Activated naive CD4-positive, alpha-beta T cell treated with anti-CD3 and anti-CD28 coated beads for 36 hours (primary cell): ENCODE measurements at regions of chr7 and their contacts with region 1.

Region 1: GRCh38 chr7:28921822-28922221 is 36.3 kb downstream of the TRIL start:
- DNase-seq: peak; percentile 49
- H3K4me3 Mint-ChIP-seq: no peak overlapping the region
- H3K27ac Mint-ChIP-seq: no peak overlapping the region
- H3K4me1 Mint-ChIP-seq: peaks cover 15% of the 10 kb centered on the region
- H3K27me3 Mint-ChIP-seq: no peaks in the 10 kb centered on the region

Region 2: GRCh38 chr7:28793381-28794085 is 128.3 kb before region 1 on chr7:
- CTCF ChIA-PET with region 1: no interaction called
- intact Hi-C with region 1: no loop called
- DNase-seq: no peak
- H3K4me3 Mint-ChIP-seq: no peak overlapping the region
- H3K27ac Mint-ChIP-seq: no peak overlapping the region
- H3K4me1 Mint-ChIP-seq: no peaks in the 10 kb centered on the region
- H3K27me3 Mint-ChIP-seq: no peaks in the 10 kb centered on the region

Region 3: DNA sequence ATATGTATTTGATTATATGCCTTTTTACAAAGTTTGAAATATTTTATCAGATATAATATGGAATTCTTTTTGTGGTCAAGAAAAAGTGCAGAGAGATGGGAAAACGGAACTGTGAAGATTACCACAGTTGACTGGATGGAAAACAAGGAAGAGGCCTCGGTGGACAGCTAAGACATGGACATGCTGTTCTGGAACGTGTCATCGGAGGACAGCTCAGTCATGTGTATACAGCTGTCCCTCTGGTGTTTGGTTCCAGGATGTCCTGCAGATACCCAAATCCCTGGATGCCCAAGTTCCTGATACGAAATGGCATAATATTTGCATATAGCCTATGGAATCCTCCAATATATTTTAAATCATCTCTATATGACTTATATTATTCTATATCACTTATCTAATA is 13.0 kb before region 1 on chr7:
- CTCF ChIA-PET with region 1: interaction called, 20 read pairs
- intact Hi-C with region 1: no loop called
- DNase-seq: no peak
- H3K4me3 Mint-ChIP-seq: no peak overlapping the region
- H3K27ac Mint-ChIP-seq: no peak overlapping the region
- H3K4me1 Mint-ChIP-seq: no peaks in the 10 kb centered on the region
- H3K27me3 Mint-ChIP-seq: peaks cover 2% of the 10 kb centered on the region

Region 4: GRCh38 chr7:29105752-29106668 is 184.2 kb after region 1 on chr7:
- CTCF ChIA-PET with region 1: interaction called, 99 read pairs
- intact Hi-C with region 1: loop called (anchors 1 kb)
- DNase-seq: peak; percentile 37
- H3K4me3 Mint-ChIP-seq: no peak overlapping the region
- H3K27ac Mint-ChIP-seq: no peak overlapping the region
- H3K4me1 Mint-ChIP-seq: peaks cover 5% of the 10 kb centered on the region
- H3K27me3 Mint-ChIP-seq: peaks cover 6% of the 10 kb centered on the region

Region 5: GRCh38 chr7:29194594-29195427 is 273.0 kb after region 1 on chr7 and contains the start of gene CHN2:
- CTCF ChIA-PET with region 1: interaction called, 14 read pairs
- intact Hi-C with region 1: loop called (anchors 2 kb)
- DNase-seq: peak; percentile 63
- H3K4me3 Mint-ChIP-seq: peak within 1 kb of the TSS; percentile 64
- H3K27ac Mint-ChIP-seq: no peak within 1 kb of the TSS
- H3K4me1 Mint-ChIP-seq: peaks cover 14% of the 10 kb centered on the region
- H3K27me3 Mint-ChIP-seq: peaks cover 59% of the 10 kb centered on the region
- total RNA-seq, gene CHN2: not detected

Region 6: DNA sequence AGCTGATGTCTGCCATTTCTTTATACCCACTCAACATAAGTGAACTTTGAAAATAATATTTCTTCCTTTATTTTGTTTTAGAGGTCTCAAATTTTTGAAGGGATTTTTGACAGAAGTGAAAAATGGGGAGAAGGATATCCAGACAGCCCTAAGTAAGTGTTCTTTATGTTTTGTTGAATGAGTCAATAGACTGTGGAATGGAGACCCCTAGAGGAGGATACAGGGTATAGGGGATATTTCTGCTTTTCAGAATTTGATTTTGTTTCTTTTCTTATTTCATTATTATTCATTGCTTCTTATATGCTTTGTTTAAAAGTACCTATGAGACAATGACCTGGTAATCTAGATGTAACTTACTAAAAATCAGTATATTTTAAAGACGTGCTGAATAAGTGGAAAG is 1140.8 kb after region 1 on chr7:
- CTCF ChIA-PET with region 1: no interaction called
- intact Hi-C with region 1: loop called (anchors 5 kb)
- DNase-seq: no peak
- H3K4me3 Mint-ChIP-seq: no peak overlapping the region
- H3K27ac Mint-ChIP-seq: no peak overlapping the region
- H3K4me1 Mint-ChIP-seq: peaks cover 5% of the 10 kb centered on the region
- H3K27me3 Mint-ChIP-seq: no peaks in the 10 kb centered on the region